Kidney (tissue), 22 donors: ENCODE measurements at regions of chr14 and their contacts with region 1.

Region 1: DNA sequence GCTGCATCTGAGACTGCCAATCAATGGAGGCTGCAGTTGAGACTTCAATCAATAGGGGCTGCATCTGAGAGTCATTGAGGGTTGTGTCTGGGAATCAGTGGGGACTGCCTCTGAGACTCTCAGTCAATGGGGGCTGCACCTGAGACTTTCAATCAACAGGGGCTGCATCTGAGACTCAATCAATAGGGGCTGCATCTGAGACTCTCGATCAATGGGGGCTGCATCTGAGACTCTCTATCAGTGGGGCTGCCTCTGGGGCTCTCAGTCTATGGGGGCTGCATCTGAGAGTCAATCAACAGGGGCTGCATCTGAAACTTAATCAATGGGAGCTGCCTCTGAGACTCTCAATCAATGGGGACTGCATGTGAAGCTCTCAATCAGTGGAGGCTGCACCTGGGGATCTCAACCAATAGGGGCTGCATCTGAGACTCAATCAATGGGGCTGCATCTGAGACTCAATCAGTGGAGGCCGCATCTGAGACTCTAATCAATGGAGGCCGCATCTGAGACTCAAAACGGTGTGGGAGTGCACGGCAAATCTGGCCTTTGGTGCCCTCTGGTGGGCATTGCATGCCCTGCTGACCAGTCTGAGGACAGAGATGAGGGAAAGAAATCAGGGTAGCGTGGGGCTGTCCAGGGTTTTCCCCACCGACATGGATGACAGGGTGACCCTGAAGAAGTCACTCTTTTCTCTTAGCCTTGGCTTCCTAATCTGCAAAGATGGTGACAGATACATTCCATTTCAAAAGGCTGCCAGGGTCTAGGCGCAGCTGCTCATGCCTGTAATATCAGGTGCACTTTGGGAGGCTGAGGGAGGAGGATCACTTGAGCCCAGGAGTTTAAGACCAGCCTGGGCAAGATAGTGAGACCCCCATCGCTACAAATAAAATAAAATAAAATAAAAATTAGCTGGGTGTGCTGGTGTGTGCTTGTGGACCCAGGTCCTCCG is 41.3 kb upstream of the EIF5 start:
- DNase-seq: peak; percentile 76 to 83 (median 81)
- H3K4me3 ChIP-seq: no peak overlapping the region
- H3K27ac ChIP-seq: no peak overlapping the region
- H3K4me1 ChIP-seq: no peaks in the 10 kb centered on the region
- H3K27me3 ChIP-seq: no peaks in the 10 kb centered on the region
- CTCF ChIP-seq: peak; percentile 97

Region 2: GRCh38 chr14:102746634-102747438 is 545.9 kb before region 1 on chr14:
- intact Hi-C with region 1: no loop called
- DNase-seq: peak in 1 of 5 donors; percentile 61
- H3K4me3 ChIP-seq: no peak overlapping the region
- H3K27ac ChIP-seq: no peak overlapping the region
- H3K4me1 ChIP-seq: no peaks in the 10 kb centered on the region
- H3K27me3 ChIP-seq: no peaks in the 10 kb centered on the region
- CTCF ChIP-seq: no peak

Region 3: DNA sequence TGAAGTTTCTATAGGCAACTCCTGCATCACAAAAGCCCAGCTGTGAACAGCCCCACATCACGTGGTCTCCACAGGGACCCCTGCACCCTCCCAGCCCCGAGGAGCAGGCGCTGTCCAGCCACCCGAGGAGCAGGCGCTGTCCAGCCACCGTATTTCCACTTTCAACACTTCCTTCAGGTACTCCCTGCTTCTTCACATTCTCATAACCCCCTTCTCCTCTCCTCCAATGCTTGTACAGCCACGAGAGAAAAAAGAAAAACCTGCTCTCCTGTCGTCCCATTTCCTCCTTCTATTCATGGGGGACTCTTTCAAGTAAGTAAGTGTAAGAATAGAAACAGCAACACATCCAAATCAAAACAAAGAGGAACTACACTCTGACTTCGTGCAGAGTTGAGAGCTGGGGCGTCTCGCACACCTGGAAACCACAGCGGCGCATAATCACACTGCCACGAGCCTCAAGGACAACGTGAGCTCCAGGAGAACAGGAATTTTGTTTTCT is 247.3 kb before region 1 on chr14:
- intact Hi-C with region 1: no loop called
- DNase-seq: peak in 3 of 5 donors; percentile 50 to 66 (median 53)
- H3K4me3 ChIP-seq: no peak overlapping the region
- H3K27ac ChIP-seq: no peak overlapping the region
- H3K4me1 ChIP-seq: peaks cover 2 to 9% (median 6%) of the 10 kb centered on the region in 3 donors
- H3K27me3 ChIP-seq: no peaks in the 10 kb centered on the region
- CTCF ChIP-seq: no peak

Region 4: GRCh38 chr14:103078093-103078749 is 214.5 kb before region 1 on chr14:
- intact Hi-C with region 1: loop called (anchors 5 kb)
- DNase-seq: peak; percentile 82 to 93 (median 88)
- H3K4me3 ChIP-seq: no peak overlapping the region
- H3K27ac ChIP-seq: no peak overlapping the region
- H3K4me1 ChIP-seq: peaks cover 0 to 11% (median 10%) of the 10 kb centered on the region in 3 donors
- H3K27me3 ChIP-seq: no peaks in the 10 kb centered on the region
- CTCF ChIP-seq: peak; percentile 86

Region 5: GRCh38 chr14:103104654-103105452 is 187.8 kb before region 1 on chr14:
- intact Hi-C with region 1: loop called (anchors 10 kb)
- DNase-seq: peak; percentile 78 to 89 (median 80)
- H3K4me3 ChIP-seq: peak overlapping the region in 1 of 3 donors; percentile 4
- H3K27ac ChIP-seq: no peak overlapping the region
- H3K4me1 ChIP-seq: peaks cover 0 to 14% (median 0%) of the 10 kb centered on the region in 3 donors
- H3K27me3 ChIP-seq: peaks cover 11% of the 10 kb centered on the region
- CTCF ChIP-seq: peak; percentile 98

Region 6: DNA sequence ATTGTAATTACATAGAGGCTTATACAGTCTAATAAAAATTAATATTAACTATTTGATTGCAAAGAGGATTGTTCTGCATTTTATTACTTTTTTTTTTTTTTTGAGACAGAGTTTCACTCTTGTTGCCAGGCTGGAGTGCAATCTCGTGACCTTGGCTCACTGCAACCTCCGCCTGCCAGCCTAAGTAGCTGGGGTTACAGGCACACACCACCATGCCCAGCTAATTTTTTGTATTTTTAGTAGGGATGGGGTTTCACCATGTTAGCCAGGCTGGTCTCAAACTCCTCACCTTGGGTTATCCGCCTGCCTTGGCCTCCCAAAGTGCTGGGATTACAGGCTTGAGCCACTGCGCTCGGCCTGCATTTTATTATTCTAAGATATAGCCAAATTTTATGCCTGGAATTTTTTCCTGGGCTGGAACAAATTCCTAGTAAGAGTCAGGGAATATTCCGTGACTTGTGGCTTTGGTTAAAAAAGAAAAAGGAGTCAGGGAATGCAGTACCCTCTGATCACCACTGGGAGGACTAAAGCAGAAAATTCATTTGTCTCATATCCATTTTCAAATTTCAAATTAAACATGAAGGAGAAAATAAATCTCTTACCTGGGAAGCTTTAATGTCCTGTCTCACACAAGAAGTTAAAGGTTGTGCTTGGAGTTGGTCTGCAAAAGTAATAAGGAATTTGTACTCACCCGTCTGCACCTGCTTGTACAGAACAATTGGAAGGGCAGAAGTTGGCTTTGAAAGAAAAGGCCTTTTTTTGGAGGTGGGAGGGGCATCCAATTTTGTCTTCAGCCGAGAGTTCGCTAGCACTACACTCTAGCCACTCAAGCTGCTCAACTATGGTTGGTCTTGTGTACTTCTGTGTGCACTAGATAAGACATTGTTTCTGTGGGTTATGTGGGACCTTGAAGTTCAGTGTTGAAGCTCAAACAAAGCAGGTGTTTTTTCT is 101.3 kb after region 1 on chr14:
- intact Hi-C with region 1: no loop called
- DNase-seq: no peak
- H3K4me3 ChIP-seq: peak overlapping the region in 1 of 3 donors; percentile 37
- H3K27ac ChIP-seq: peak overlapping the region in 1 of 2 donors; percentile 9
- H3K4me1 ChIP-seq: peaks cover 2 to 24% (median 14%) of the 10 kb centered on the region in 3 donors
- H3K27me3 ChIP-seq: no peaks in the 10 kb centered on the region
- CTCF ChIP-seq: peak; percentile 75